Left cardiac atrium (tissue), 4 donors: ENCODE measurements at regions of chr7 and their contacts with region 1.

Region 1: GRCh38 chr7:76133164-76133775 is 68.4 kb upstream of the SRRM3 start:
- DNase-seq: no peak
- ATAC-seq: no peak

Region 2: DNA sequence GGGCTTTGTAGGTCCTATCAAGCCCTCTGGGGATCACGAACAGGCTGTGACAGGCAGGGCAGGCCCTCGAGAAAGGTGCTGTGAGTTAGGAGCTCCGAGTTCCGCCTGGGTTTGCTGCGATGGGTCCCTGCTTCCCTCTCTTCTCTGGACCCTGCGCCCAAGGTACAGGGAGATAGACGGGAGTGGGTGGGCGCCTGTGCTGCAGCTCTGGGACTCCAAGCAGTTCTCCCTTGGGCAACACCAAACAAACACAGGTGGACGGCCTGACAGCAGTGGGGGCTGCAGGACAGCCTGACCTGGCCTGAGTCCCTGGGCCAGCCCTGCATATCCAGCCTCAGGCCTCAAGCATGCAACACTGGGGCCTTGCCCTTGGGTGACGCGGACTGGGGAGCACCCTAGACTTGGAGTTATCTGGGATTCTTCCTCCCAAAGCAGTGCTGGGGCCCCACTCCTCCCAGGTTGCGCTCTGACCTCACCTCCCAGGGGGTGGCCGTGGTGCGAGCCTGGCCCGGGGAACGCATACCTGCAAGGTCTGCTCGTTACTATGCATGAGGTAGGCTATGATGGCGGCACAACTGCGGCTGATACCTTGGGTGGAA is 132.8 kb before region 1 on chr7:
- intact Hi-C with region 1: no loop called
- DNase-seq: no peak
- ATAC-seq: no peak

Region 3: DNA sequence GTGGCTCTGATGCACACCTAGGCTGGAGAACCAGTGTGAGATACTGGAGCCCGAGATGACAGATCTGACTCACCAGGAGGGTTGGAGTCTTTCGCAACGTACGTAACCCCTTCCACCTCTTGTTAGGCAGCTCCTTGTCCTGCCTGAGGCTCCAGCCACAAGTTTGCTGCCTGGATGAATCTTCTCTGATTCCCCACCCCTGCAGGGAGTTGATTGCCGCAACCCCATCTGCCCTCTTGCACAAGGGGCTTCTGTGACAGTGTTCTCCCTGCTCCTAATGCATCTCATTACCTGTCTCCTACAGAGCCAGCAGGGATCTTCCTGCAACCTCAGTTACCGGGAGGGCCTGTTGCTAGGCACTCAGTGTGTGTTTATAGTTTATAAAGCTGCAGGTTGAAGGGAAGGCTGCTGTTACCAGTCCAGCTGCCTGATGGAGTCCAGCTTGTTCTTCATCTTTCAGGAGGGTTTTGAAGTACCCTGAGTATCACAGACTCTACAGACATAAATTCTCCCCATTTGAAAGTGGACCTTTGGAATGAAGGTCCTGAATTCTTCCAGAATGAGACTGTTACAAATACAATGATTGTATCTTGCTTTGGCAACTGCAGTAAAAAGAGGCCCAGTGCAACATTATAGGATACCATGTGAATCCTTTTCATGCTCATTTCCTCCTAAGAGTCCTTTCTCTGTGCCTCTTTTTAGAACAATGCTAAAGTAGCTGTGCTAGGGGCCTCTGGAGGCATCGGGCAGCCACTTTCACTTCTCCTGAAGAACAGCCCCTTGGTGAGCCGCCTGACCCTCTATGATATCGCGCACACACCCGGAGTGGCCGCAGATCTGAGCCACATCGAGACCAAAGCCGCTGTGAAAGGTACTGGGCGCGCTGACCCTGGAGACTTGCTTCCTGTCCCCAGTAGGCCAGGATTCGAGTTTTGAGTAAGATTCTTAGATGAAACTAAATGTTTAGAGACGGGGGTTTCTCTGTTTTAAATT is 78.8 kb before region 1 on chr7:
- intact Hi-C with region 1: loop called in 1 of 2 experiments (anchors 10 kb)
- DNase-seq: no peak
- ATAC-seq: peak; percentile 29 to 84